WTC11 (cell line): ENCODE measurements at regions of chr20 and their contacts with region 1.

Region 1: GRCh38 chr20:33719989-33720709 is at the start of gene PXMP4:
- DNase-seq: peak; percentile 85
- ATAC-seq: peak; percentile 98
- H3K4me3 Mint-ChIP-seq: peak within 1 kb of the TSS; percentile 70
- H3K27ac Mint-ChIP-seq: peak within 1 kb of the TSS; percentile 7; the same call in 1 of the 2 replicates
- H3K4me1 Mint-ChIP-seq: peaks cover 4% of the 10 kb centered on the region
- H3K27me3 Mint-ChIP-seq: peaks cover 6% of the 10 kb centered on the region; the same call in 1 of the 2 replicates
- CTCF ChIP-seq: no peak
- total RNA-seq, gene PXMP4: 3.3 to 6.0 TPM (median 5.8 TPM) in 3 replicates

Region 2: GRCh38 chr20:33731693-33732165 is 11.6 kb after region 1 on chr20 and contains the start of gene ZNF341:
- CTCF ChIA-PET with region 1: interaction called, 19 read pairs
- POLR2A ChIA-PET with region 1: interaction called, 4 read pairs
- DNase-seq: peak; percentile 90
- ATAC-seq: peak; percentile 78
- H3K4me3 Mint-ChIP-seq: peak within 1 kb of the TSS; percentile 78
- H3K27ac Mint-ChIP-seq: peak within 1 kb of the TSS; percentile 79
- H3K4me1 Mint-ChIP-seq: peaks cover 19% of the 10 kb centered on the region
- H3K27me3 Mint-ChIP-seq: peaks cover 10% of the 10 kb centered on the region
- CTCF ChIP-seq: peak; percentile 85
- total RNA-seq, gene ZNF341: 7.8 to 9.6 TPM (median 8.0 TPM) in 3 replicates